B cell (primary cell): ENCODE measurements at regions of chr16 and their contacts with region 1.

Region 1: DNA sequence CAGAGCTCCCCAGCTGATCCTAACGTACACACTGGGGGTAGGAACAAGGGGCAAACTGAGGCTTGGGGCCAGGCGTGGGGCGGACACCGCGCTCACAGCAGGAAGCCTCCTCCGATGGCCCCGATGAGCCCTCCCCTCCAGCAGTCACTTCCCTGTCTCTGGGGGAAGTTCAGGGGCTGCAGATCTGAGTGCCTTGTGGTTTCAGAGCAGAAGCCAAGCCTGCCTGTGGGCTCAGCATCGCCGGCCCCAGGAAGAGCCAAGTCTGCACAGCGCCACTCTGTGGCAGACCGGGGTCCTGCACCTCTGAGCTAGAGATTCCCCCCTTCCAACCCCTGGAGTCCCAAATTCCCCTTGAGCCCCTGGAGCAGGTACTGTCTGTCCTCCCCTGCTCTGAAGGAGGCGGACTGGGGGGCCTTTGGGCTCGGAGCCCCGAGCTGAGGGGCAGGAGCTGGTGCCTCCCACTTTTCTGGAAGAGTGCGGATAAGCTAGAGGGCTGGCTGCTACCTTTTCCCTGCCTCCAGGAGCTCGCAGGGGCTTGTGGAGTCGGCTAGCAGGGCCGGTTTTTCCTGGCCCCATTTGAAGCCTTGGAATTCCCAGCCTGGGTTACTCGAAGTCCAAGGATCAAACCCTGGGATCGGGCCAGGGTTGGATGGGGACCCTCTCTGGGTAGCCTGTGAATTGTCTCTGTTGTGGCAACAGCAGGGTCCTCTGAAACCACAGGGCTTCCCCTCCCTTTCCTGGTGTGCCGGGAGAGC is 2.9 kb downstream of the GSE1 start:
- DNase-seq: peak; percentile 90
- ATAC-seq: peak; percentile 52
- H3K4me3 ChIP-seq: peak overlapping the region in 4 of 5 experiments; percentile 4 to 60 (median 26)
- H3K4me3 Mint-ChIP-seq: peak overlapping the region; percentile 85
- H3K27ac ChIP-seq: peak overlapping the region; percentile 13 to 14
- H3K27ac Mint-ChIP-seq: peak overlapping the region; percentile 88
- H3K4me1 ChIP-seq: peaks cover 45 to 54% of the 10 kb centered on the region in 2 donors
- H3K4me1 Mint-ChIP-seq: peaks cover 46% of the 10 kb centered on the region
- H3K27me3 ChIP-seq: no peaks in the 10 kb centered on the region
- H3K27me3 Mint-ChIP-seq: no peaks in the 10 kb centered on the region
- CTCF ChIP-seq: peak; percentile 91

Region 2: GRCh38 chr16:85446951-85447692 is 168.9 kb before region 1 on chr16:
- CTCF ChIA-PET with region 1: interaction called, 12 read pairs
- POLR2A ChIA-PET with region 1: interaction called, 6 read pairs
- intact Hi-C with region 1: no loop called
- DNase-seq: peak; percentile 77
- ATAC-seq: peak; percentile 86
- H3K4me3 ChIP-seq: no peak overlapping the region
- H3K4me3 Mint-ChIP-seq: peak overlapping the region; percentile 23
- H3K27ac ChIP-seq: no peak overlapping the region
- H3K27ac Mint-ChIP-seq: peak overlapping the region; percentile 56
- H3K4me1 ChIP-seq: peaks cover 24 to 31% of the 10 kb centered on the region in 2 donors
- H3K4me1 Mint-ChIP-seq: peaks cover 24% of the 10 kb centered on the region
- H3K27me3 ChIP-seq: peaks cover 0 to 15% (median 3%) of the 10 kb centered on the region in 4 experiments
- H3K27me3 Mint-ChIP-seq: peaks cover 11% of the 10 kb centered on the region
- CTCF ChIP-seq: no peak

Region 3: GRCh38 chr16:85491058-85491771 is 124.8 kb before region 1 on chr16:
- CTCF ChIA-PET with region 1: interaction called, 18 read pairs
- POLR2A ChIA-PET with region 1: interaction called, 3 read pairs
- intact Hi-C with region 1: loop called (anchors 2 kb)
- DNase-seq: peak; percentile 61
- ATAC-seq: no peak
- H3K4me3 ChIP-seq: no peak overlapping the region
- H3K4me3 Mint-ChIP-seq: no peak overlapping the region
- H3K27ac ChIP-seq: no peak overlapping the region
- H3K27ac Mint-ChIP-seq: no peak overlapping the region
- H3K4me1 ChIP-seq: no peaks in the 10 kb centered on the region
- H3K4me1 Mint-ChIP-seq: peaks cover 2% of the 10 kb centered on the region
- H3K27me3 ChIP-seq: peaks cover 0 to 16% (median 0%) of the 10 kb centered on the region in 4 experiments
- H3K27me3 Mint-ChIP-seq: peaks cover 24% of the 10 kb centered on the region
- CTCF ChIP-seq: peak; percentile 70

Region 4: DNA sequence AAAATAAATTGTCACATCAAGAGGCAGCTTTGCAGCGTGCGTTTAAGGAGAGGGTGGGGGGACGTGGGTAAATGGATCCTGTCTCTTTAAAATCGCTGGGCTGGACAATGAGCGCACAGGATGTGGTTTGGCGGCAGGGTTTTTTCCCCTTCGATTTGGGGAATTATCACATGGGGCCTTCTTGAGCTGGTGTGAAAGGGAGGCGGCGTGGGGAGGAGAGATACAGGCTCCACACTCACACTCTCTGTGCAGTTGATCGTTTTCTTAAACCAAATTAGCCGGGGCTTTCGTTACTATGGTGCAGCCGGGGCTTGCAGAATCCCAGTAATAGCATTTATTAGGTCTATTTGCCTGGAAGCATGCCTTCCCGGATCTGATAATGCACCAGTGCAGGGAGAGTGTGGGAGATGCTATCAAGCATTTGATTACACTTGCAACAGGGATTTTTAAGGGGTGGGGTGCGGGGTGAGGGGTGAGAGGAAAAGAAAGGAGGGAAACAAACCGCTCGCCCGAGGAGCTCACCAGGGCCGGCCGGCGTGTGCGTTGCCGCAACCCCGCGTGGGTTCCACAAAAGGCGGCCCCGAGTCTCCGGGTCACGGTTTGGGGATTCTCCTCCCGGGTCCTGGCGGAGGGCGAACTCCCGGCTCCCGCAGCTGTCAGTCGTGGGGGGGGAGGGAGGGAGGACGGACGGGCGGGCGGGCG is 61.8 kb before region 1 on chr16:
- CTCF ChIA-PET with region 1: interaction called, 46 read pairs
- POLR2A ChIA-PET with region 1: interaction called, 16 read pairs
- intact Hi-C with region 1: loop called (anchors 1 kb)
- DNase-seq: peak; percentile 92
- ATAC-seq: peak; percentile 61
- H3K4me3 ChIP-seq: peak overlapping the region; percentile 46 to 99 (median 87)
- H3K4me3 Mint-ChIP-seq: peak overlapping the region; percentile 92
- H3K27ac ChIP-seq: peak overlapping the region; percentile 79 to 92
- H3K27ac Mint-ChIP-seq: peak overlapping the region; percentile 95
- H3K4me1 ChIP-seq: peaks cover 21 to 33% of the 10 kb centered on the region in 2 donors
- H3K4me1 Mint-ChIP-seq: peaks cover 38% of the 10 kb centered on the region
- H3K27me3 ChIP-seq: no peaks in the 10 kb centered on the region
- H3K27me3 Mint-ChIP-seq: no peaks in the 10 kb centered on the region
- CTCF ChIP-seq: no peak

Region 5: DNA sequence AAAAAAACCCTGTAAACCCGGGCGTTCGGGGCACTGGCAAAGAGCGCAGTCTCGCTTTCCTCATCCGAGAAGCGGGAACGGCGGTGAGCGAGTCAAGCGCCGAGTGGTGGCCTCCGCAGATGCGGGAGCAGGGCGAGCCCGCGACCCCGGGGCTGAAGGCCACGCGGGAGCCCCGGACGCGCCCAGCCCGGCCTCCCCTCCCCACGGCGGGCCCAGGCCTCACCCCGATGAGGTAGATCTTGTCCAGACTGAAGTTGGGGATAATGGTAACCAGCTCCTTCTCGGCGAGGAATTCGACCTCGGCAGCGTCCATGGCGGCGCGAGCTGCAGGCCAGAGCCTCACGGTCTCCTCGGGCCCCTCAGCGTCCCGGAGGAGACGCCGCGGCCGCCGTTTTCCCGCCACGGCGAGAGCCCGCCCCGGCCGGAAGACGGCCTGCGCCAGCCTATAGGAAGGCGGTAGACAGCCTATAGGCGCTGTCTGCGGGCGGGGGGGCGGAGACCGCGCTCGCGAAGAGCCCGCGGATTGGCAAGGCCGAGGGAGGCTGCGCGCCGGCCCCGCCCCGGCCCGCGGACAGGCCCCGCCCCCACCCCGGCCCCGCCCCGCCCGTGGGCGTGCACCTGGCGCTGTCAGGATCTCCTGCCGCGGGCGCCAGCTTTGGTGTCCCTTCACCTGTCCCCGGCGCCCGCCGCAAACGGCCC is 72.7 kb after region 1 on chr16 and contains the start of gene GINS2:
- CTCF ChIA-PET with region 1: interaction called, 3 read pairs
- POLR2A ChIA-PET with region 1: no interaction called
- intact Hi-C with region 1: loop called (anchors 5 kb)
- DNase-seq: peak; percentile 93
- ATAC-seq: peak; percentile 100
- H3K4me3 ChIP-seq: peak within 1 kb of the TSS in 4 of 5 experiments; percentile 52 to 78 (median 70)
- H3K4me3 Mint-ChIP-seq: peak within 1 kb of the TSS; percentile 81
- H3K27ac ChIP-seq: no peak within 1 kb of the TSS
- H3K27ac Mint-ChIP-seq: no peak within 1 kb of the TSS
- H3K4me1 ChIP-seq: peaks cover 15 to 29% of the 10 kb centered on the region in 2 donors
- H3K4me1 Mint-ChIP-seq: peaks cover 19% of the 10 kb centered on the region
- H3K27me3 ChIP-seq: peaks cover 0 to 13% (median 5%) of the 10 kb centered on the region in 4 experiments
- H3K27me3 Mint-ChIP-seq: peaks cover 3% of the 10 kb centered on the region
- CTCF ChIP-seq: no peak
- total RNA-seq, gene GINS2: 4.2 and 4.3 TPM in 2 replicates

Region 6: DNA sequence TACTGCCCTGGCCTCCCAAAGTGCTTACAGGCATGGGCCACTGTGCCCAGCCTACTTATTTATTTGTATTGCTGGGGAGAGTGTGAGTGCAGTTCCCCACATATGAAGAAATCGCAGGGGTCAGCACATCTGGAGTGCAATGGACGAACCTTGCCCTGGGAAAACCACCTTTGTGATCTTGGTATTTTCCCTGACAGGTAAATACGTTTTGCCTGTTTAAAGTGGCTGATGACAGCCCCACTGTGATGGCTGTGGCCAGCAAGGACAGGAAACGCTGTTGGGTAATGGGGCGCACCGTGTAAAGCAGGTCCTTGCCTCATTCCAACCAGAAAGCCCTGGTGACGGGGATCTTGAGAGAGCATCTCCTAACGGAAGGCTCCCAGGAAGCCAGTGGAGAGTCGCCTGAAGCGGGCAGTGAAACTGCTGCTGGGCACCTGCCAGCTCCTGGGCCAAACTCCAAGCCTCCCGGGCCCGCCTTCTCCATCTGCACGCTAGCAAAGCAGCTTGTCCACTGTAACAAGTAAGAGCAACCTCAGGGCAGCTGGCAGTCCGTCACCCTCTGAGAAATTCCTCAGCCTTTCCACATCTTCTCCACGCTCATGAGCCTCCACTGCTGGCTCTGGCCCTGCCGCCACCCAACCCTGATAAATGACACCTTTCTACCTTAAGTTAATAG is 165.8 kb after region 1 on chr16:
- CTCF ChIA-PET with region 1: no interaction called
- POLR2A ChIA-PET with region 1: no interaction called
- intact Hi-C with region 1: no loop called
- DNase-seq: no peak
- ATAC-seq: no peak
- H3K4me3 ChIP-seq: no peak overlapping the region
- H3K4me3 Mint-ChIP-seq: no peak overlapping the region
- H3K27ac ChIP-seq: no peak overlapping the region
- H3K27ac Mint-ChIP-seq: no peak overlapping the region
- H3K4me1 ChIP-seq: no peaks in the 10 kb centered on the region
- H3K4me1 Mint-ChIP-seq: peaks cover 5% of the 10 kb centered on the region
- H3K27me3 ChIP-seq: no peaks in the 10 kb centered on the region
- H3K27me3 Mint-ChIP-seq: no peaks in the 10 kb centered on the region
- CTCF ChIP-seq: no peak